Activated CD4-positive, alpha-beta memory T cell treated with anti-CD3 and anti-CD28 coated beads for 36 hours (primary cell): ENCODE measurements at regions of chr19 and their contacts with region 1.

Region 1: GRCh38 chr19:4815426-4816201 is 15.9 kb downstream of the TICAM1 start:
- DNase-seq: peak; percentile 81
- H3K4me3 Mint-ChIP-seq: peak overlapping the region; percentile 55
- H3K27ac Mint-ChIP-seq: peak overlapping the region; percentile 57
- H3K4me1 Mint-ChIP-seq: peaks cover 25% of the 10 kb centered on the region
- H3K27me3 Mint-ChIP-seq: no peaks in the 10 kb centered on the region

Region 2: GRCh38 chr19:4723367-4724187 is 92.0 kb before region 1 on chr19 and contains the start of gene DPP9:
- CTCF ChIA-PET with region 1: interaction called, 10 read pairs
- POLR2A ChIA-PET with region 1: no interaction called
- intact Hi-C with region 1: no loop called
- DNase-seq: peak; percentile 98
- H3K4me3 Mint-ChIP-seq: peak within 1 kb of the TSS; percentile 84
- H3K27ac Mint-ChIP-seq: peak within 1 kb of the TSS; percentile 95
- H3K4me1 Mint-ChIP-seq: peaks cover 28% of the 10 kb centered on the region
- H3K27me3 Mint-ChIP-seq: peaks cover 5% of the 10 kb centered on the region
- total RNA-seq, gene DPP9: 54.8 to 57.5 TPM

Region 3: DNA sequence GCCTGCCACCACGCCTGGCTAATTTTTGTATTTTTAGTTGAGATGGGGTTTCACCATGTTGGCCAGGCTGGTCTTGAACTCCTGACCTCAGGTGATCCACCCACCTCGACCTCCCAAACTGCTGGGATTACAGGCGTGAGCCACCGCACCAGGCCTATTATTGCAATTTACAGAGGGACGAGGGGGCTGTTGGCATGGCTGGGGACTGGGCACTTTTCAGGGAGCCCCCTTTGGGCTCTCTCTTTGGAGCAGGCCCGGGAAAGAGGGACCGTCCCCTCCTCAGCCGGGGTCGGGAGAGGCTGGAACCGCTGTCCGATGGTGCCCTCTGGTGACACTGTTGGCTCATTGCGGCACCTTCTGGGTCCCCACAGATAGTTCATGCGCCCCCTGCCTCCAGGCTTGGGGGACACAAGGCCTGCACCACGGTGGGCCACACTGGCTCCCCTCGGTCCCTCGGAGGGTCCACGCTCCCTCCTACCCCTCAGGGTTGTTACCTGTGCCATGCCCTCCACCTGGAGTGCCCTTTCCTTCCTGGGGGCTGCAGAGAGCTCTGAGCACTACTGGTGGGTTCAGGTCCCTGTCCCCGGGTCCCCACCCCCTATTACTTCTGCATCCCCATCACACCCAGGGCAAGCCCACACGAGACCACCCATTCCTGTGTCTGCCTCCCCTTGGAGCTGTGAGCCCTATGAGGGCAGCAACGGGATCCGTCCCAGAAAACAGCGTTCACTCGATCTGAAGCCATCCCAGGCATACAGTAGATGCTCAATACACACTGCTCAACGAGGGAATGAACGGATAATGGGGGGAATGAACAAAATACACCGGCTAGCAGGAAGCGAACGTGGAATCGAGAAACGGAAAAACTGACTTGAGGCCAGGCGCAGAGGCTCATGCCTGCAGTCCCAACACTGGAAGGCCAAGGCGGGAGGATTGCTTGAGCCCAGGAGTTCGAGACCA is 11.6 kb before region 1 on chr19:
- CTCF ChIA-PET with region 1: interaction called, 30 read pairs
- POLR2A ChIA-PET with region 1: no interaction called
- intact Hi-C with region 1: no loop called
- DNase-seq: peak; percentile 73
- H3K4me3 Mint-ChIP-seq: no peak overlapping the region
- H3K27ac Mint-ChIP-seq: no peak overlapping the region
- H3K4me1 Mint-ChIP-seq: no peaks in the 10 kb centered on the region
- H3K27me3 Mint-ChIP-seq: no peaks in the 10 kb centered on the region

Region 4: GRCh38 chr19:4841366-4841704 is 25.7 kb after region 1 on chr19:
- CTCF ChIA-PET with region 1: interaction called, 395 read pairs
- POLR2A ChIA-PET with region 1: interaction called, 4 read pairs
- intact Hi-C with region 1: no loop called
- DNase-seq: no peak
- H3K4me3 Mint-ChIP-seq: peak overlapping the region; percentile 22
- H3K27ac Mint-ChIP-seq: peak overlapping the region; percentile 85
- H3K4me1 Mint-ChIP-seq: peaks cover 23% of the 10 kb centered on the region
- H3K27me3 Mint-ChIP-seq: no peaks in the 10 kb centered on the region

Region 5: DNA sequence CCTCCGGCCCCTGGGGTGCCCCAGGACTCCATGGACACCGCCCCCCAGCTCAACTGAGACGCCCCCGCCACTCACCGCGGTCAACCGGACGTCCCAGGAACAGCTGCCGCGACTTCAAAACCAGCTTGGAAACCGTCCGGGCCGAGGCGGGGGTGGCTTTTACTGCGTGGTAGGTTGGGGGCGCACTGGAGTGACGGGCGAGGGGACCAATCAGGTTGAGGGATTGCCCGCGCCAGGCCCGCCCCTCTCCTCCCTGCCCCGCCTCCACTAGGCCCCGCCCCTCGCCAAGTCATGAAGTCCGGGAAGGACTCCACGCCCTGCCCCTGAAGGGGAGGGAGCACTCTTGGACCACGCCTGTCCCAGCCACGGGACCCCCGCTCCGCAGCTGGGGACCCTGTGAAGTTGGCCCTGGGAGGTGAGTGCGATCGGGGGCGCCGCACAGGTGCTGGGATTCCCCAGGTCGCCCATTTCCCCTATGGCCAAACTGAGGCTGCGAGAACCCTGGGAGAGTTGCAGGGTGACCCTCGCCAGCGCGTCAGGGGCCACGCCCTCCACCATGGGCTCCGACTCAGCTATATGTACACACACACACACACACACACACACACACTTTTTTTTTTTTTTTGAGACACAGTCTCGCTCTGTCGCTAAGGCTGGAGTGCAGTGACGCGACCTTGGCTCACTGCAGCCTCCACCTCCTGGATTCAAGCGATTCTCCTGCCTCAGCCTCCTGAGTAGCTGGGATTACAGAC is 52.1 kb after region 1 on chr19 and contains the start of gene PLIN3:
- CTCF ChIA-PET with region 1: interaction called, 40 read pairs
- POLR2A ChIA-PET with region 1: no interaction called
- intact Hi-C with region 1: no loop called
- DNase-seq: peak; percentile 97
- H3K4me3 Mint-ChIP-seq: peak within 1 kb of the TSS; percentile 79
- H3K27ac Mint-ChIP-seq: peak within 1 kb of the TSS; percentile 69
- H3K4me1 Mint-ChIP-seq: peaks cover 22% of the 10 kb centered on the region
- H3K27me3 Mint-ChIP-seq: peaks cover 2% of the 10 kb centered on the region
- total RNA-seq, gene PLIN3: 36.6 to 37.7 TPM

Region 6: DNA sequence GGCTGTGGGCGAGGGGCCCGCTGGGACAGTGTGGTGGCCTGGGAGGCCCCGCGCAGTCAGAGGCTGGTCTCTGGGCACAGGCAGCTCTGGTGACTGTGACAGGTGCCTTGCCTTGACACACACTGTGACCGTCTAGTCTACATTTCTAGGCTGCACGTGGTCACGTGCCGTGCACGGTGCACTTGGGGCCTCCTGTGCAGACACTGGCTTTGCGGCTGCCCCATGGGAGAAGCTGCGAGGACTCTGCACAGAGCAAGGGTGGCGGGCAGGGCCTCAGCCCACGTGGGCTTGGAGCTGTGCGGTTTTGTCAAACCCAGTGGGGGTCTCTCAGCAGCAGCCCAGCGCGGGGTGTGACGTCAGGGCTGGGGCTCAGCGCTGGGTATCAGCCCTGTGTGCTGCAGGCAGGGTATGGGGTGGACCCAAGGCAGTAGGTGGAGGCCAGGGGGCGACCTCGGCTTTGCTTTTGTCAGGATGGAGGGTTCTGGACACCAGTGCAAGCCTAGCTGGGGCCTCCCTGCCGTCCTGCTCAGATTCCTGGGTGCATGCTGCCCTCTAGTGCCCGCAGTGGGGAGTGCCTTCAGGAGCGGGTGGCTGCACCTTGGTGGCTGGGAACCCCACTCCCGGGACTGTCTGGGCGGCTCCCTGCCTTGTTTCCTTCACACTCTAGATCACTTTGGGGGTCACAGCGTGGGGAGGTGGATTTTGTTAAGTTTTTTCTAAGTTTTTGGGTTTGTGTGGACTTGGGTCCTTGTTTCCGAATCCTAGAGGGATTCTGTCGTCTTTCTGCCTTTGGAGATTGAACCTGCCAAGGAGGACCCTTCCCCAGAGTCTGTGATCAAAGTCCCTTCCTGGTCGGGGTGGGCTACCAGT is 215.9 kb after region 1 on chr19:
- CTCF ChIA-PET with region 1: interaction called, 60 read pairs
- POLR2A ChIA-PET with region 1: no interaction called
- intact Hi-C with region 1: loop called (anchors 2 kb)
- DNase-seq: peak; percentile 88
- H3K4me3 Mint-ChIP-seq: no peak overlapping the region
- H3K27ac Mint-ChIP-seq: no peak overlapping the region
- H3K4me1 Mint-ChIP-seq: no peaks in the 10 kb centered on the region
- H3K27me3 Mint-ChIP-seq: no peaks in the 10 kb centered on the region